Naive thymus-derived CD8-positive, alpha-beta T cell (primary cell): ENCODE measurements at regions of chr9 and their contacts with region 1.

Region 1: DNA sequence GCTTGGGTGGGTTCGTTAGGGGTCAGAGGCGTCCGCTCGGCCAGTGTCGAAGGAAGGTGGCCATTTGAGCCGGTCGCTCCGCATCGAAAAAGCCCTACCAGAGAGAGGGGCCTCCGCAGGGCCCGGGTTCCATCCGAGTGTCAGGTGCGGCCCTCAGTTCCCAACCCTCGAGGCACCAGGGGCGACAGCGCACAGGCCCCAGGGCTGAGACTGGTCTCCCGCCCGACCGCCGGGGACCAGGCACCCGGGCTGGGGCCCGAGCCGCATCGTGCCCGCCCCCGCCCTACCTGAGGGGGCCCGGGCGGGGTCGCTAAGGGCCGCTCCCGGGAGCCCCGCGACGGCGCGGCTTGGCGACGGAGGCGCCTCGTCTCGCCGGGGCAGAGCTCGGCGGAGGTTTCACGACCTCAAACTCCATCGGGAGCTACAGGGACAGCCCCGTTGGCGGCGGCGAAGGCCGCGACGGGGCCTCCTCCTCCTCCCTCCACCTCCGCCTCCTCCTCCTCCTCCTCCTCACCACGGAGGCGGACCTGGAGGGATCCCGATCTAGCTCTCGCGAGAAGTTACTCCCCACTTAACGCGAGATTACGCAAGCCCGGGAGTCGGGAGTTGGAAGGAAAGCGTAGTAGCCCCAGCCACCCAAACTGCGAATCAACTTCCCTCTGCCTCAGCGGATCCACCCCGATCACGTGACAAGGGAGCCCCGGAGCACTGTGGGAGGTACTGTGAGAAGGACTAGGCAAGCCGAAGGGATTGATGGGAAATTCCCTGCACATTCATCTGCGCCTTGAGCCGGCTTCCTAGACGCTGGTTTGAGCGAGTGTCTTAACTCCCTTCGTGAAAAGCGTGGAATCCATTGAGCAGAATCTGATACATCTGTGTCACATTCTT is at the start of gene RC3H2:
- DNase-seq: peak; percentile 83 to 99 (median 98)
- ATAC-seq: peak; percentile 89 to 91
- H3K4me3 Mint-ChIP-seq: peak within 1 kb of the TSS; percentile 87 to 97 (median 94)
- H3K27ac Mint-ChIP-seq: peak within 1 kb of the TSS; percentile 95 to 99 (median 98)
- H3K4me1 Mint-ChIP-seq: peaks cover 10 to 48% (median 26%) of the 10 kb centered on the region in 4 donors
- H3K27me3 Mint-ChIP-seq: no peaks in the 10 kb centered on the region
- polyA plus RNA-seq, gene RC3H2: 17.1 to 23.2 (median 18.2) TPM

Region 2: DNA sequence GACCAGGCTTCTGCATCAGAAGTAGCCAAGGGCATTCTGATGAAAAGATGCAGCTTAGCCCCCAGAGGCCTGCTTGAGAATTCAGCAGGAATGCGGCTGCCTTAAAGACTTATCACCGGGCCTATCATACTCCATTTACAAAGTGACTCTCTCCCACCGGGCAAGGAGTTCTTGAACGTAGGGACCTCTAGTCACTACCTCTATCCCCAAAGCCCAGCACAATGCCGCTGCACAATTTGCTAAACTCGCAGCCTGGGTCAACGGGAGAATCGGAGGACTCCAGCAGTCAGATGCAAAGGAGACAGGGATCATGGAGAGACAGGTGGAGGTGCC is 77.3 kb before region 1 on chr9:
- POLR2A ChIA-PET with region 1: interaction called, 11 read pairs
- DNase-seq: no peak
- ATAC-seq: peak; percentile 6 to 16
- H3K4me3 Mint-ChIP-seq: peak overlapping the region; percentile 94 to 99 (median 98)
- H3K27ac Mint-ChIP-seq: peak overlapping the region; percentile 91 to 98 (median 97)
- H3K4me1 Mint-ChIP-seq: peaks cover 16 to 46% (median 42%) of the 10 kb centered on the region in 4 donors
- H3K27me3 Mint-ChIP-seq: no peaks in the 10 kb centered on the region

Region 3: DNA sequence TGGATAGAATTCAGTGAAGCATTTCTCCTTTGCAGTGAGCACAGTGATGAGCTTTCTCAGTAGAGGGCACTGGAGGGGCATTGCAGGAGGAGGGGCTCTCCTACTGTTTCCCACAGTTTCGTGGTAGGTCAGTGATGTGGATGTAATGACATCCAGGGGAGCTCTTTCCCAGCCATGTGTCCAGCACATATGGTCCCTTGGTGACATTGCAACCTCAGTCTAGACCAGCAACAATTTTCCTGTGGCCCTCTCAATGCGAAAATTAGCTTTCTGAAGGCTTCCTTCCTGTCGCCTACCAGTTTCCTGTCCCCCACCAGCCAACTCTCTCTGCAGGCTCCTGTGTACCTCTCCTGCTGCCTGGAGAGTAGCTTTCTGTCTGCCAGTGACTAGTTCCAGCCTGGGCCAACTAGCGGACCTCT is 69.7 kb before region 1 on chr9:
- POLR2A ChIA-PET with region 1: interaction called, 11 read pairs
- DNase-seq: peak in 5 of 10 donors; percentile 9 to 44 (median 20)
- ATAC-seq: peak; percentile 89 to 90
- H3K4me3 Mint-ChIP-seq: peak overlapping the region; percentile 59 to 90 (median 82)
- H3K27ac Mint-ChIP-seq: peak overlapping the region; percentile 79 to 94 (median 88)
- H3K4me1 Mint-ChIP-seq: peaks cover 15 to 22% (median 17%) of the 10 kb centered on the region in 4 donors
- H3K27me3 Mint-ChIP-seq: no peaks in the 10 kb centered on the region

Region 4: GRCh38 chr9:122931226-122932121 is 26.4 kb after region 1 on chr9 and contains the start of gene ZBTB26:
- POLR2A ChIA-PET with region 1: interaction called, 44 read pairs
- DNase-seq: peak; percentile 78 to 93 (median 86)
- ATAC-seq: peak; percentile 97 to 98
- H3K4me3 Mint-ChIP-seq: peak within 1 kb of the TSS in 1 of 10 donors; percentile 97
- H3K27ac Mint-ChIP-seq: peak within 1 kb of the TSS in 6 of 10 donors; percentile 95 to 98 (median 96)
- H3K4me1 Mint-ChIP-seq: peaks cover 10 to 35% (median 19%) of the 10 kb centered on the region in 4 donors
- H3K27me3 Mint-ChIP-seq: no peaks in the 10 kb centered on the region
- polyA plus RNA-seq, gene ZBTB26: 0.57 to 1.3 (median 0.66) TPM

Region 5: DNA sequence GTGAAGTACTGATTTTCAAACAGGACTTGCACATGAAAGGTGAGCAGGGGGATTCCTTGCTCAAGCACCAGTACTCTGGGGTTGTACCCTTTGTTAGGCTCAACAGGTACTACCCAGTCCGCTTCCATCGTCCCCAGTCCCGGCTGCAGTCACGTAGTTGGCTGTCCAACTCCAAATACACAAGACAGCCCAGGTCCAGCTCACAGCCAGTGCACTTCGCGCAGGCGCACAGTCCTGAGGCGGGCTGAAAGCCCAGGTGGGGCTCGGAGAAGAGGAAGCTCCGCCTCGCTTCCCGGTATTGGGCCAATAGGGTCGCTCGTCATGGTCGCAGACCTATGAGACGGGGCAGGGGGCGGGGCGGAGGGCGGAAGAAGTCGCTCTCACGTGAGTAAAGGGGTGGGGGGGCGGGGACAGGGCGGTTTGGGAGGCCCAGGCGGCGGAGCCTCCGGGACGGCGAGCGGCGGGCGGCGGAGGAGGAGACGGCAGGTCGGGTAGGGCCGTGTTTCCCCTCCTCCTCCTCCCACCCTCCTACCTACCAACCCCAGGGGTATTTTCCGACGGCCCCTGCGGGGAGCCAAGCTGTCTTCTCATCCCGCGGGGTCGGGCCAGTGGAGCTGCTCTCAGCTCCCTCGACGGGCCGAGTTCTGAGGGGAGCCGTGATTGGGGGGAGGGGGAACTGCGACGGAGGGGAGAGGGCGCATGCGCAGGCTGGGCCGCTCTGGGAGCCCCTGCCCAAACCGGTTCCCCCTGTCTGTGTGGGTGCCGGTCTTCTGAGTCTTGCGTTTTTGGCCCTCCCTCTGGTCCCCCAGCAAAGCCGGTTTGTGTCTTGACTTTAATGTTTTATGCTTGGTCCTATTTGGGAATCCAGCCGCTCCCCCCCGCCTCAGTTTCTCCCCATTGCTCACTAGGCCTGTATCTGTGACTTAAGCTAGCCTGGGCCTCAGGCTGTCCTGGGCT is 35.8 kb after region 1 on chr9 and contains the start of gene RABGAP1:
- POLR2A ChIA-PET with region 1: interaction called, 36 read pairs
- DNase-seq: peak; percentile 89 to 99 (median 96)
- ATAC-seq: peak; percentile 97 to 98
- H3K4me3 Mint-ChIP-seq: peak within 1 kb of the TSS; percentile 90 to 97 (median 94)
- H3K27ac Mint-ChIP-seq: peak within 1 kb of the TSS; percentile 79 to 97 (median 94)
- H3K4me1 Mint-ChIP-seq: peaks cover 11 to 51% (median 39%) of the 10 kb centered on the region in 4 donors
- H3K27me3 Mint-ChIP-seq: no peaks in the 10 kb centered on the region
- polyA plus RNA-seq, gene RABGAP1: 21.9 to 26.6 (median 23.8) TPM

Region 6: GRCh38 chr9:122954253-122954691 is 49.2 kb after region 1 on chr9:
- POLR2A ChIA-PET with region 1: no interaction called
- DNase-seq: no peak
- ATAC-seq: no peak
- H3K4me3 Mint-ChIP-seq: no peak overlapping the region
- H3K27ac Mint-ChIP-seq: no peak overlapping the region
- H3K4me1 Mint-ChIP-seq: peaks cover 17 to 43% (median 27%) of the 10 kb centered on the region in 4 donors
- H3K27me3 Mint-ChIP-seq: no peaks in the 10 kb centered on the region